GM23248 (cell line): ENCODE measurements at regions of chr15 and their contacts with region 1.

Region 1: DNA sequence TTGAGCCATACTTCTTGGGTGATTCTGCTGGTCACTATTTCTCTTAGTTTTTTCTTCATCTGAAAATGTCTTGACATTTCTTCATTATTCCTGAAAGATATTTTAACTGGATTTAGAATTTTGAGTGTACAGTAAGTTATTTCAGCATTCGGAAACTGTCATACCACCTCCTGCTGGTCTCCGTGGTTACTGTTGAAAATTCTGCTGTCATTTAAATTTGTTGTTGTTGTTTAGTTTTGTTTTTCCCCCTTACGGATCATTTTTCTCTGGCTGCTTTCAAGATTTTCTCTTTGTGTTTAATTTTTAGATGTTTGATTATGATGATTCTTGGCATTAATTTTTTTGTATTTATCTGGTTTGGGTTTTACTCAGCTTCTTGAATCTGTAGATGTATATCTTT is 100.5 kb downstream of the CHRNA7 start:
- DNase-seq: no peak
- H3K4me3 ChIP-seq: no peak overlapping the region
- H3K27ac ChIP-seq: no peak overlapping the region
- H3K4me1 ChIP-seq: no peaks in the 10 kb centered on the region
- H3K27me3 ChIP-seq: no peaks in the 10 kb centered on the region

Region 2: DNA sequence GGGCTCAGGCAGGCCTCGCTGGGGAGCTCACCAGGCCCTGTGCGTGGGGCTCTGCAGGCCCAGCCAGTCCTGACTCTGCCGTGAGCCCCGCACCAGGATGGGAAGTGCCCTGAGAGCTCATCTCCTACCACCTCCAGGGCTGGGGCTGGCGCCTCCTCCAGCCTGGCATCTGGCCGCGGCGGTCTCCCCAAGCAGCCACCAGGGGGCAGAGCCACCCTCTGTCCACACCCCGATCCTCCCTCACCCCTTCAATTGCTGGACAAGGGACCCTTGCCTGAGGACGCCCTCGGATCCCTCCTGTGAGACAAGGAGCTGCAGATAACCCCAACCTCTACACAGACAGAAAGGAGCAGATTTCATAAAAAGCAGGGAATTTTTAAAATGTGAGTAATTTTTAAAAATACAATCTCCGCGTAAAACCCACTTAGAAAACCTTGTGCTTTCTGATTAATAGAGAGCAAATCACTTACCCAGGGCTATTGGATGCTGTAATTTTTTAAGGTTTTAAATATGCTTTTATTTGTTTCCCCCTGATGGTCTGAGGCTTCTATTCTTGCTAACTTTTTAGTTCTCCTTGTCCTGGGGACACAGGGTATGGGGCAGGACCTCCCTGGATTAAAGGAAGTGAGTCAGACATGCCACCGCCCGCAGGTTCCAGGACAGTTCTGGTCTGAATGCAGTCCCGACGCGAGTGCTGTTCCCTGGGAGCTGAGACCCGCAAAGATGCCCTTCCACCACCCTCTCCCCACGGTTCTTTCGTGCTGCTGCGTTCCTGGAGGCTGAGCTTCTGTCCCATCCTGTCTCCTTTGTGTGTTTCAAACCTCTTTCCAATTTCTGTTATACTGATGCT is 152.8 kb before region 1 on chr15:
- in situ Hi-C with region 1: loop called (anchors 25 kb)
- DNase-seq: peak; percentile 68
- H3K4me3 ChIP-seq: no peak overlapping the region
- H3K27ac ChIP-seq: no peak overlapping the region
- H3K4me1 ChIP-seq: no peaks in the 10 kb centered on the region
- H3K27me3 ChIP-seq: no peaks in the 10 kb centered on the region; the same call in 1 of the 2 replicates